Adrenal gland (tissue), 19 donors: ENCODE measurements at regions of chr16 and their contacts with region 1.

Region 1: DNA sequence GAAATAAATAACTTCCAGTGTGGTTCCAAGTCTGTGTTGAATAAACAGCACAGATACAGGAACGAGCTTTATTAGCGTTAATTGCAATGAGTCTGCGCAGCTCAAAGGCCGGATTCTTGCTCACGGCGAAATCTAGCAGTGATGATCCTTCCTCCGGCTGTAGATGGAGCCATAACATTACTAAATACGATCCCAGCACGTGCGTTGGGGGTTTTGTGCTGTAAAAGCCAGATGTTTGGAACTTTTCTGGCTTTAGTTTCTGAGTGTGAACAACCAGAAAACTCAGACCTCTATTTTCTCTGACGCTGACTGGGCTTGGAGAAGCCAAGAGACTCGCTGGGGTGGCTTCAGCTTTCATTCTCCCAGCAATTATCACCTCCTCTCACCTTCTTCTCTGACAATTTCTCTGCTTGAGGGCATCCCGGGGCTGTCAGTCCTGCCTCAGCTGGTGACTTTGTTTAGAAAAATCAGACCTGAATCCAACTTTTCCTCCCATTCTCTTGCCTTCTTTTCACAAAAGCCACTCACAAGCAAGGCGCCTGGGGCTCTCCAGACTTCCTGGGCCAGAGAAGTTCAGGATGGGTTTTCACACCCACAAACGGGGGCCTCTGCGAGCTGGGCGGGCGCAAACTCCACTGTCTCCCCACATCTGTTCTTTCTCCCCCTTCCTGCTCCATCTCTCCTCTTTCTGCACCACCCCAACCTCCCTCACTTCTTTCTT is 47.1 kb upstream of the AKTIP start:
- DNase-seq: peak; percentile 53 to 82 (median 67)
- H3K4me3 ChIP-seq: no peak overlapping the region
- H3K27ac ChIP-seq: no peak overlapping the region
- H3K4me1 ChIP-seq: no peaks in the 10 kb centered on the region
- H3K27me3 ChIP-seq: no peaks in the 10 kb centered on the region
- CTCF ChIP-seq: peak; percentile 40 to 81 (median 69)
- POLR2A ChIP-seq: no peak

Region 2: GRCh38 chr16:53482123-53482522 is 68.0 kb before region 1 on chr16:
- intact Hi-C with region 1: no loop called
- DNase-seq: no peak
- H3K4me3 ChIP-seq: no peak overlapping the region
- H3K27ac ChIP-seq: no peak overlapping the region
- H3K4me1 ChIP-seq: no peaks in the 10 kb centered on the region
- H3K27me3 ChIP-seq: no peaks in the 10 kb centered on the region
- CTCF ChIP-seq: no peak
- POLR2A ChIP-seq: no peak

Region 3: DNA sequence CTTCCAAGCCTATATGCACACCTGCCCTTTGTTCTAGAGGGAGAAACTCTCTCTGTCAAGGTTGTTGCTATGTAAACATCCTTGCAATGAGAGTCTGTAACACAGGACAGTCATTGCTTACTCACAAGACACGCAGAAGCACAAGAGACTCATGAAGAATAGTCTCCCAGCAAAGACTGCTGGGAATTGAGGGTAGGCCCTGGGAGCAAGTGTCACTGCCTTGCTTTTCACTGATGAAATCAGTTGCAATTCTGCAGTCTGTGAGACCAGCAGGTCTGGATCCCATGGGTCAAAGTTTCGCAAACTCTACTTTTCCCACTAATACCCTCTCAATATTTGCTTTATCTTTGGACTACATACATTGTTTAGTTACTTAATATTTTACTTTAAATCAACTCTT is 331.2 kb after region 1 on chr16:
- intact Hi-C with region 1: loop called in 1 of 2 experiments (anchors 10 kb)
- DNase-seq: peak in 1 of 7 donors; percentile 8
- H3K4me3 ChIP-seq: no peak overlapping the region
- H3K27ac ChIP-seq: no peak overlapping the region
- H3K4me1 ChIP-seq: peaks cover 10% of the 10 kb centered on the region in 2 donors
- H3K27me3 ChIP-seq: no peaks in the 10 kb centered on the region
- CTCF ChIP-seq: no peak
- POLR2A ChIP-seq: no peak